ENCODE measurements at regions of chr1 and their contacts with region 1.

Region 1: GRCh38 chr1:167517535-167518330 is 596 bp downstream of the CD247 start:
- DNase-seq: peak; percentile 72
- H3K4me3 Mint-ChIP-seq: peak overlapping the region; percentile 95
- H3K27ac Mint-ChIP-seq: peak overlapping the region; percentile 99
- H3K4me1 Mint-ChIP-seq: peaks cover 38% of the 10 kb centered on the region
- H3K27me3 Mint-ChIP-seq: peaks cover 6% of the 10 kb centered on the region

Region 2: DNA sequence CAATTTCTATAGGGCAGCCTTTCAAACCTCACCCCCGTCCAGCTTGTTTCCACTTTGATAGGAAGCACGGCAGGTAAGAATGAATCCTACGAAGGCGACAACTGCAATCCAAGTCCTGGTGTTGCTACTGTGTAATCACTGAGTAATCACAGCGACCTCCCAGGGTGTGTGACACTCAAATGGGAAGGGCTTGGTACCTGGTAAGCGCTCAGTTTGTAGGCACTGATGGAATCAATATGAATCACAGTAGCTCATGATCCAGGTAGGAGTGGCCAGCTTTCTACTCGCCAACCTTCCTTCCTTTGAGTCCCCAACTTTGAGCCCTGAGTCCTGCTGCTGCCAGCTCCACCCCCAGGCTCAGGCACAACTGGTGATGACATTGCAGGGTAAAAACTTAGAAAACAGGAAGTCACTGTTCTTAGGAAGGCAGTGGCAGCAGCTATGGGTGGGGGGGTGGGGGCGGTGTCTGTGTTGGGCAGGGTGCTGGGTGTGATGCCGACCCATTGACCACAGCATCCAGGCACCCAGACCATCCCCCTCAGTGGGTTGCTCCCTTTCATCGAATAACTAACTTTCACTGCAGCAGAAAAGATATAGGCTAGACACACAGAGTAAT is 70.1 kb before region 1 on chr1:
- intact Hi-C with region 1: loop called (anchors 1 kb)
- DNase-seq: peak; percentile 69
- H3K4me3 Mint-ChIP-seq: peak overlapping the region; percentile 65
- H3K27ac Mint-ChIP-seq: peak overlapping the region; percentile 94
- H3K4me1 Mint-ChIP-seq: peaks cover 64% of the 10 kb centered on the region
- H3K27me3 Mint-ChIP-seq: no peaks in the 10 kb centered on the region

Region 3: DNA sequence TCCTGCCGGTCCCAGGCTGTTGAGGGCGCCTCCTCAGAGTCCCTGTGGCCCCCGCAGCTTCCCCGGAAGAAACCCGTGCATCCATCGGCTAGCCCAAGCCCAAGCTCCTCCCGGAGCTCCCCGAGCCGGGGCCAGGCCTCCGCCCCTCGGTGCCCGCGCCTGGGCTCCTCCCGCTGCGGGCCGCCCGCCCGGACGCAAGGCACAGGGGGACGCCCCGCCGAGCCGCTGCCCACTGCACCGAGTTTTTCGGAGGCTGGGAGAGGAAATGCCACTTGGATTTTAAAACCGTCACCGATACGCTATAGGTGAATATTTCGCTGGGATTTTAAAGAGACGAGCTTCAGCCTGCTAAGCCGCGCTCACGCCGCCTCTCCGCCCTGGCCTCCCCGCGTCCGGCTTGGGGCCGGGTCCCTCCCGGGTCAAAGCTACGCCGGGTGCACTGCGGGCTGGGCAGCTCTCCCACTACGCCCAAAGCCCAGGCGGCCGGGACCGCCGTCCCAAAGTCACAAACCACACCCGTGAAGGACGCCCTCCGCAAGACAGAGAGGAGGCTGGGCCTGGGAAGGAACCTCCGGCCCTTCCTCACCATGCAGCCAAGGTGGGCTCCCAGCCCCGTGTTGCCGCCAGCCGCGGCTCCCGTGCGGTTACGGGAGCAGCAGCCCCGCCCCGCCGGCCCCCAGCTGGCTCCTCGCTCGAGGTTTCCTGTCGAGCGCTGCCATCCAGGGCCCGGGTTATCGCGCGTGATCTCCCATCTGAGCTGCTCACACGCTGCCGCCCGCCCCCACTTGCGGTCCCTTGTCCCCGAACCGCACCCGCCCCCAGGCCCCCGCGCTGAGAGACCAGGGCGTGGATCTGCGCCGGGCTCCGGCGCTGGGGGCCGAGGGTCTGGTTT is 62.6 kb before region 1 on chr1:
- intact Hi-C with region 1: loop called (anchors 1 kb)
- DNase-seq: peak; percentile 77
- H3K4me3 Mint-ChIP-seq: peak overlapping the region; percentile 77
- H3K27ac Mint-ChIP-seq: peak overlapping the region; percentile 51
- H3K4me1 Mint-ChIP-seq: peaks cover 50% of the 10 kb centered on the region
- H3K27me3 Mint-ChIP-seq: no peaks in the 10 kb centered on the region

Region 4: DNA sequence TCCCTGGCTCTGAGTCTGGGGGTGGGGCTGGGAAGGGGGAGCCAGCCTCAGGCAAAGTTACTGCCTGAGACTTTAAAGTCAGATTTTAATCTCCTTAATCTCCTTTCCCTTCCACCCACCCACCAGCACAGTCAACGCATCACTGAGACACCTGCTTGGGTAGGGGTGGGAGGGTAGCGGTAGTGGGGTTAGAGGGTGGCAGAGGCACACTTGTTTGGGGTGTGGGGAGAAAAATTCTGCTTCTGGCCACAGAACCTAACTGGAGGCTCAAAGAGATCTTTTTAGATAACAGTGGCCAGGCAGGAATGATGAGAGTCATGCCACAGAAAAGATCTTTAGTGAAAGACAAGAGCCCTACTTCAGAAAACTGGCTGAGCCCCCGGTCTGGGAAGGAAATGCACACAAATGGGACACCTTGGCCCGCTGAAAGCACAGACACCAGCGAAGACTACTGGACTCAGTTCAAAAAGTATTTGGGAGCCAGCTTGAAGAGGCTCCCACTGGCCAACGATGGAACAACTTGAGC is 43.5 kb before region 1 on chr1:
- intact Hi-C with region 1: loop called (anchors 5 kb)
- DNase-seq: no peak
- H3K4me3 Mint-ChIP-seq: peak overlapping the region; percentile 43
- H3K27ac Mint-ChIP-seq: peak overlapping the region; percentile 79
- H3K4me1 Mint-ChIP-seq: peaks cover 64% of the 10 kb centered on the region
- H3K27me3 Mint-ChIP-seq: no peaks in the 10 kb centered on the region

Region 5: DNA sequence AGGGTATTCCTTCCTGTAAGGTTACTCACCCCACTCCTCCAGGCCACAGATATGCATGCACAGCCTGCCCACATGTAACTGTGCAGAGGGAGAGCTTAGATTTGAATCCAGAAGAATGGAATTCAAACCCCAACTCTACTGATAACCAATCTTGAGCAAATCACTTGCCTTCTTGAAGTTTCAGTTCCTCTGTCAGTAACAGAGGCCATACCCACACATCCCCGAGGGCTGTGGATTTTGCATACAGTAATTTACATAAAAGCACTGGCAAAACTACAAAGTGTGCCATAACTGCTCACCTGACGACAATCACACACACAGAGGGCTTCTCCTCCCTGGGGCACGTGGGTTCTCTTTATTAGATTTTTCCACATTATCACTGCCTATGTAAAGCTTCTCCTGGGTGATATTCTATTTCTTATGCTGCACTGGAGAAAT is 18.1 kb before region 1 on chr1:
- intact Hi-C with region 1: loop called (anchors 1 kb)
- DNase-seq: no peak
- H3K4me3 Mint-ChIP-seq: peak overlapping the region; percentile 6
- H3K27ac Mint-ChIP-seq: peak overlapping the region; percentile 96
- H3K4me1 Mint-ChIP-seq: peaks cover 91% of the 10 kb centered on the region
- H3K27me3 Mint-ChIP-seq: no peaks in the 10 kb centered on the region

Region 6: DNA sequence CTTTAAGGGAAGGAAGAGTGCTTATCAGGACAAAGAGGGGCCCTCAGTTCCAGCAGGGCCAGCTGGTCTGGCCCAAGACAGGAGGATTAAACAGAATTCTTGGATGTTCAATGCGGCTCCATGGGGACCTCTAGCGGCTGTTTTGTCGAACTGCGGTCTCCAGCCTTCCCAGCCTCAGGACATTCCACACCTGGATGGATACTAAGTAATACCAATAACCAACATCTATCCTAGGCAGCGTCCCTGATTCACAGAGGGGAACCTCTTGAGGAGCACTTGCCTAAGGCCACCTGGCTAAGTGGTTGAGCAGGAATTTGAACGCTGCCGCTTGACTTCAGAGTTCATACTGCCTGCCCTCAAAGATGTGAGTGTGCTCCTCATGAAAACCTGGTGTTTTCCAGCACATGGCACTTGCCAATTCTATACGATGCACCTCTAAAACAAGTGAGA is 16.1 kb after region 1 on chr1:
- intact Hi-C with region 1: loop called (anchors 2 kb)
- DNase-seq: peak; percentile 47
- H3K4me3 Mint-ChIP-seq: no peak overlapping the region
- H3K27ac Mint-ChIP-seq: no peak overlapping the region
- H3K4me1 Mint-ChIP-seq: peaks cover 4% of the 10 kb centered on the region
- H3K27me3 Mint-ChIP-seq: peaks cover 3% of the 10 kb centered on the region

Region 7: DNA sequence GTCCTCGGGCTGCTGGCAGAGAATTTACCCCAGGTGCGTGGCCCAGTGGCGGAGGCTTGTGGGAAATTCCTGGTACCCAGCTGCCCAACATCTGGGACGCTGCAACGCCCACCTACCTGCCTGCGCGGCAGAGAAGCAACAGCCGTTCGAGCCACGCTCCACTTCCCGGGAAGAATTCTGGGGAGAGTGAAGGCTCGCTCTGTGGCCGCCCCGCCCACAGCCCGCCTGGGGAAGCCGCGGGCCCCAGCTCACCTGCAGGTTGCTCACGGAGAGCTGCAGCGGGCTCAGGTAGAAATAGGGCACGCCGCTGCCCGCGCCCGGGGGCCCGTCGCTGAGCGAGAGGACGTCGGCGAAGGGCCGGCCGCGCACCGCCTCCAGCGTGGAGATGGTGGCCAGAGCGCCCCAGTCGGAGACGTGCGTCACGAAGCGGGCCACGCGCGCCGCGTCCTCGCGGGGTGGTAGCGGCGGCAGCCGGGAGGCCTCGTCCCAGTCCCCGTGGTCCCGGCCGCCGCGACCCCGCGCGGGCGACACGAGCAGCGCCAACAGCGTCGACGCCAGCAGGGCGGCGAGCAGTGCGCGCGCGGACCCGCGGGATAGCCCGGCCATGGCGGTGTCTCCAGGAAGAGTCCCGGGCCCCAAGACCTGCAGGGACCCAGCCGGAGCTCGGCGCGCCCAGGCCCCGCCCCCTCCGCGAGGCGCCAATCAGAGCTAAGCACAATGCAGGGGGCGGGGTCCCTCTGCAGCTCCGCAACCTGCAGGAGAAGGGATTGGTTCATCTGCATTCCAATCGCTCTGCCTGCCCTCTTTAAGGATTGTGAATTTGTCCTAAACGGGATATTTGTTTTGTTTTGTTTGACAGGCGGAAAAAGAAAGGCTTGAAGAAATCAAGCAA is 35.6 kb after region 1 on chr1 and contains the start of gene CREG1:
- intact Hi-C with region 1: loop called (anchors 2 kb)
- DNase-seq: peak; percentile 86
- H3K4me3 Mint-ChIP-seq: peak within 1 kb of the TSS; percentile 86
- H3K27ac Mint-ChIP-seq: peak within 1 kb of the TSS; percentile 40
- H3K4me1 Mint-ChIP-seq: peaks cover 27% of the 10 kb centered on the region
- H3K27me3 Mint-ChIP-seq: peaks cover 8% of the 10 kb centered on the region
- total RNA-seq, gene CREG1: 13.8 and 15.6 TPM in 2 replicates

Measured in activated T-helper 2 cell treated with anti-CD3 and anti-CD28 coated beads, Interferon-gamma antibody, Interleukin-2, Interleukin-4, amounts not matched to agents 10 μg/mL and 5 μg/mL and 100 μg/mL, durations not matched to agents 14 hours and 24 hours and 36 hours (primary cell).